ENCODE measurements at regions of chr18 and their contacts with region 1.

Region 1: DNA sequence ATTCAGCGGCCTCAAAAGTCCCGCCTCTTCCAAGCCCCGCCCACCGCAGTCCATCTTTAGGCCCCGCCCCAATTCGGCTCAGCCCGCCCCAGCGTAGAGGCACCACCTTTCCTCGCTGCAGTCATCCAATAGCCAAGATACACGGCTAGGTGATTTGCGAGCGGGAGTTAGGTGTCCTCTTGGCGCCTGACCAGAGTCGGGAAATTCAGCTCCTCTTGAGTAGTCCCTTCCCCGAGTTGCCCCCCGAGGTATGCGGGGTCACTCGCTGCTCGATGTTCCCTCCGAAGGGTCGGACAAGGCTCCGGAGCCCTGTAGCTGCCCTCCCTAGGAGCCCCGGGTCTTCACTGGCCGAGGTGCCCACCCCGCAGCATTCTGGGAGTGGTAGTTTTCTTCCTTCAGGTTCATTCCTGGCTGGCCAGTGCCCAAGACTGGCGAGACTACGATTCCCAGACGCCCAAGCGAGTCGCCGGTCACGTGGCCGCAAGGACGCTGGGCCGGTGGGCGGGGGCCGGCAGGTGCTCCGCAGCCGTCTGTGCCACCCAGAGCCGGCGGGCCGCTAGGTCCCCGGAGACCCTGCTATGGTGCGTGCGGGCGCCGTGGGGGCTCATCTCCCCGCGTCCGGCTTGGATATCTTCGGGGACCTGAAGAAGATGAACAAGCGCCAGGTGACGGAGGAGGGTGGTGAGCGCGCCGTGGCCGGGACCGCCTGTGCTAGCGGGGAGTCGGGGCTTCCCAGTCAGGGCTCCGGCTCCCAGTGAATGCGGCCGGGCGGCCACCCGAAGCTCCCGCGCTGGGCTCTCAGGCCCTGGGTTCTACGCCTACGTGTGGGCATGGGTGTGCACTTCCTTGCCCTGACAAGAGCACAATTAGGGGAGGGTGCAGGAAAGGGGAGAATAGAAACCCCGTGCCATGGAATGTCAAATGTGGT is at the start of gene SEC11C:
- DNase-seq: peak; percentile 95 to 97
- H3K4me3 ChIP-seq: peak within 1 kb of the TSS; percentile 55 to 79 (median 79)
- H3K27ac ChIP-seq: peak within 1 kb of the TSS; percentile 92 to 95
- H3K4me1 ChIP-seq: no peaks in the 10 kb centered on the region
- H3K27me3 ChIP-seq: peaks cover 0 to 6% of the 10 kb centered on the region in 2 donors
- CTCF ChIP-seq: no peak
- POLR2A ChIP-seq: no peak
- total RNA-seq, gene SEC11C: 11.5 to 44.1 (median 38.7) TPM

Region 2: GRCh38 chr18:57209713-57210661 is 1929.6 kb before region 1 on chr18:
- intact Hi-C with region 1: loop called (anchors 10 kb)
- DNase-seq: peak in 1 of 2 donors; percentile 21
- H3K4me3 ChIP-seq: peak overlapping the region in 1 of 3 donors; percentile 34
- H3K27ac ChIP-seq: no peak overlapping the region
- H3K4me1 ChIP-seq: no peaks in the 10 kb centered on the region
- H3K27me3 ChIP-seq: peaks cover 0 to 7% of the 10 kb centered on the region in 2 donors
- CTCF ChIP-seq: no peak
- POLR2A ChIP-seq: no peak

Measured in breast epithelium (tissue), 4 donors.